Adrenal gland (tissue), 19 donors: ENCODE measurements at regions of chr4 and their contacts with region 1.

Region 1: DNA sequence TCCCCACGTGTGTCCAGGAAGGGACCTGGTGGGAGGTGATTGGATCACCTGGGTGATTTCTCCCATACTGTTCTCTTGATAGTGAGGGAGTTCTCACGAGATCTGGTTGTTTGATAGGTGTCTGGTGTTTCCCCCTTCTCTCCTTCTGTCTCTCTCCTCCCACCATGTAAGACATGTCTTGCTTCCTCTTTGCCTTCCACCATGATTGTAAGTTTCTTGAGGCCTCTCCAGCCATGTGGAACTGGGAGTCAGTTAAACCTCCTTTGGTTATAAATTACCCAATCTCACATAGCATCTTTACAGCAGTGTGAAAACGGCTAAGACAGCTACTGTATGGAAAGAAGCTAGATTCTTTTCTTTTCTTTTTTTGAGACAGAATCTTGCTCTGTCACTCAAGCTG is 21.6 kb upstream of the FGG start:
- DNase-seq: no peak
- H3K4me3 ChIP-seq: no peak overlapping the region
- H3K27ac ChIP-seq: no peak overlapping the region
- H3K4me1 ChIP-seq: no peaks in the 10 kb centered on the region
- H3K27me3 ChIP-seq: peaks cover 11% of the 10 kb centered on the region
- CTCF ChIP-seq: no peak
- POLR2A ChIP-seq: no peak

Region 2: DNA sequence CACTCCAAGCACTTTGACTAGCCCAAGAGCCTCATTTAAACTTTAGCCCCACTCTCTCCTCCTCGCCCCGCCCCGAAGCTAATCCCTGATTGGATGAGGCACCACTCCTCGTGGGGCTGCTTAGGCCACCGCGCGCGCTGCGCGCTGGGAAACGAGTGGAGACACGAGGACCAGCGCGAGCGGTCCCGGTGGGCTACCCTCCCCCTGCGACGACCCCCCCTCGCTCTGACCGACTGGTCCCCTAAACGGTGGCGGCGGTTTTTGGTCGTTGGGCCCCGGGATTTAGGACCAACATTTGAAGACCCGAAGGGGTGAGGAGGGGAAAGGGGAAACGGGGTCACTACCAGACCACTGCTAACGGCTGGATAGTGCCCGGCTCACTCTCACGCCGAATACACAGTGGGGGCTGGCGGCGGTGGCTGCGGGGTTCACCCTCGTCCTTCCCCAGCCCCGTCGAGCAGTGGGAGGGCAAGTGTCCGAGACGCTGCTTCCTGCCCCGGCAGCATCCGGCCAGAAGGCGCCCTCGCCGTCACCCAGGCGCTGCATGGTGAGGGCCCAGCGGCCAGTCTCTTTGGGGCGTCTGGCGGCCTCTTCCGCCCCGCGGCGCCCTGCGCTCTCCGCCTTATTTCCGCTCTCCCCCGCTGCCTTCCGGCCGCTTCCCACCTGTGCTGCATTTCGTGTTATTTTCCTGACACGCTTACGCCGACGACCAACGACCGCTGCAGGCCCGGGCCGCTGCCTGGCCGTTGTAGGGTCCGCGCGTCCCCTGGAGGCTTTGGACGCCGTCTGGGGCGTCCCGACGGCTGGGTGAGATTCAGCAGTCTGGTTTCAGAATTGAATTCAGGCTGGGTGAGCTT is 147.3 kb after region 1 on chr4 and contains the start of gene RBM46:
- intact Hi-C with region 1: loop called in 1 of 2 experiments (anchors 10 kb)
- DNase-seq: no peak
- H3K4me3 ChIP-seq: no peak within 1 kb of the TSS
- H3K27ac ChIP-seq: no peak within 1 kb of the TSS
- H3K4me1 ChIP-seq: no peaks in the 10 kb centered on the region
- H3K27me3 ChIP-seq: peaks cover 5% of the 10 kb centered on the region
- CTCF ChIP-seq: no peak
- POLR2A ChIP-seq: no peak
- total RNA-seq, gene RBM46: 0.08 TPM in 1 of 9 donors, not detected in the others